Heart right ventricle (tissue), 16 donors: ENCODE measurements at regions of chr12 and their contacts with region 1.

Region 1: GRCh38 chr12:12837025-12837872 is 24.1 kb downstream of the DDX47 start:
- DNase-seq: peak in 1 of 2 donors; percentile 12
- ATAC-seq: peak; percentile 35 to 83 (median 56)
- H3K4me3 ChIP-seq: no peak overlapping the region
- H3K27ac ChIP-seq: no peak overlapping the region
- H3K4me1 ChIP-seq: peaks cover 0 to 7% (median 0%) of the 10 kb centered on the region in 9 donors
- H3K27me3 ChIP-seq: no peaks in the 10 kb centered on the region
- CTCF ChIP-seq: peak in 8 of 9 donors; percentile 29 to 63 (median 52)

Region 2: DNA sequence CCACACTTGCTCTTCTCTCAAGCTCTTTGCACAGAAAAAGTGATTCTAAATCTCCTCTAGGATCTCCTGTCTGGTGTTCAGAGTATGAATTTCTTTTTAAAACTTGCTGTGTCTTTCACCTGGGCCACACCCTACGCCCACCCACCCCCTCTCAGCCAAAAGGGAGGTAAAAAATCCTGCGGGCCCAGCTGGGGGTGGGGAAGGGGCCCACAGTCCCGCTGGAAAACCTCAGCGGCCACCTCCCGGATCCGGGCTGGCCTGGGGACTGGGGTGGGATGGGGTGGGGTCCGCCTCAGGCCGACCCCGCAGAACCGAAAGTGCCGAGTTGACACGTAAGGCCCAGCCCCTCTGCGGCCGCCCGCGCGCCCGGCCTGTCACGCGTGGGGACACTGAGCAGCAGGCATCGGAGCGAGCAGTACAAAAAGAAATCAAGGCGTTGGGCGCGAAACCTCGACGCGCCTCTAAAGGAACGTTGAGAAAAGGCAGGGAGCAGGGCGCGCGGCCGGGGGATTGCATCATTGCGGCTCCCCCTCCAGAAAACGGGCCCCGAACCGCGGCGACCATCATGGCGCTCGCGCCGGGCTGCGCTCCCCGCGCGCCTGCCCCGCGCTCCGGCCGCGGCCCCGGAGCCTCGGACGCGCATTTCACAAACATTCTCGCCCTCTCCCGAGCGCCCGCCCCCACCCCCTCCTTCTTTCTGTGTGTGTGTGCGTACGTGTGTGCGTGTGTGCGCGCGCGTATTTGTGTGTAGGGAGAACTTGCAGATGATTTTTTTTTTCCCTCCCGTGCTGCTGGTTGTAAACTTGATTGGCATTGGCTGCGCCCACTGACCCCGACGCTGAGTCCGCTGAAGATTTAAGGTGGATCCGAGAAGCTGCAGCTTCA is 112.3 kb before region 1 on chr12:
- intact Hi-C with region 1: no loop called
- DNase-seq: peak; percentile 90 to 96
- ATAC-seq: peak; percentile 82 to 89 (median 86)
- H3K4me3 ChIP-seq: peak overlapping the region; percentile 42 to 90 (median 77)
- H3K27ac ChIP-seq: peak overlapping the region; percentile 95 to 100 (median 98)
- H3K4me1 ChIP-seq: peaks cover 3 to 64% (median 44%) of the 10 kb centered on the region in 9 donors
- H3K27me3 ChIP-seq: no peaks in the 10 kb centered on the region
- CTCF ChIP-seq: peak in 1 of 9 donors; percentile 19

Region 3: DNA sequence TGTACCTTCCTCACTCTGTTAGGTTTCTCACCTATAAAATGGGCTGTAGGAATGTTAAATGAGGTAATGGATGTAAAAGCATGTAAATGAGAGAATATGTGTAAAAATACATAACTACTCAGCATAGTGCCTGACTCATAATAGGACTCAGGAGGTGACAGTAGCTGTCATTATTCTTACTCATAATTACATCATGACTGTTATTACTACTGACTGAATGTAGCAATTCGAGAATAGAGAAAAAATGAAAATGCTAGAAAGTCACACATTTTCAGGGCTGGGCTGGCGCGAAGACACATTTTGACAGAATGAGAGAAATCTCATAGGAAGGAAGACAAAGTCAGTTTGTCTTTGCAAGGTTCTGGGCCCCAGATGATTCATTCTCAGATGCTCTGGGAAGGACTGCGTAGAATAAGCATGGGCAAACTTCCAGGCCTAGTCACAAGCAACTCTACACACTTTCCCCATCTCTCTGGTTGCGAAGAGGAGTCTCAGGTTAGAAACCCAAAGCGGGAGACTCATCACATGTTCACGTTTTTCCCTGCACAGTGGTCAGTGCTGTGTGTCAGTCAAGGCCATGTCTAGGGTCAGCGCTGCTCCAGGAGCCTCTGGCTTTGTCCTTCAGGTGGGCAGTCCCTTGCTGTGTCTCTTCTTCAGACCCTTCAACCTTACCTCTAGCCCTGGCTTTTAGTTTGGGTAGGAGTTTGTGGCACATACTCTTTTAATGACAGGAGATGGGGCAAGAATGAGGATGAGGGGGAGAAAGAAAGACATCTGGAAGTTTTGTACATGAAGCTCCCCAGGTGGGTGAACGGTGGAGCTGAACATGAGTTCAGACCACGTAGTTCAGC is 62.5 kb after region 1 on chr12:
- intact Hi-C with region 1: loop called in 1 of 10 experiments (anchors 10 kb)
- DNase-seq: no peak
- ATAC-seq: peak in 4 of 8 donors; percentile 25 to 68 (median 38)
- H3K4me3 ChIP-seq: no peak overlapping the region
- H3K27ac ChIP-seq: peak overlapping the region in 7 of 10 donors; percentile 9 to 67 (median 48)
- H3K4me1 ChIP-seq: peaks cover 0 to 25% (median 0%) of the 10 kb centered on the region in 9 donors
- H3K27me3 ChIP-seq: peaks cover 0 to 14% (median 0%) of the 10 kb centered on the region in 7 donors
- CTCF ChIP-seq: no peak